ENCODE measurements at regions of chr16 and their contacts with region 1.

Region 1: GRCh38 chr16:88856828-88857733 is at the starts of genes GALNS and TRAPPC2L:
- DNase-seq: peak; percentile 98
- H3K4me3 ChIP-seq: peak within 1 kb of the TSS; percentile 82 to 93
- H3K27ac ChIP-seq: peak within 1 kb of the TSS; percentile 78 to 79
- H3K4me1 ChIP-seq: peaks cover 3% of the 10 kb centered on the region
- H3K27me3 ChIP-seq: no peaks in the 10 kb centered on the region
- CTCF ChIP-seq: no peak
- POLR2A ChIP-seq: peak; percentile 80
- total RNA-seq, gene GALNS: 20.4 to 75.1 TPM
- total RNA-seq, gene TRAPPC2L: 23.7 to 38.9 TPM

Region 2: DNA sequence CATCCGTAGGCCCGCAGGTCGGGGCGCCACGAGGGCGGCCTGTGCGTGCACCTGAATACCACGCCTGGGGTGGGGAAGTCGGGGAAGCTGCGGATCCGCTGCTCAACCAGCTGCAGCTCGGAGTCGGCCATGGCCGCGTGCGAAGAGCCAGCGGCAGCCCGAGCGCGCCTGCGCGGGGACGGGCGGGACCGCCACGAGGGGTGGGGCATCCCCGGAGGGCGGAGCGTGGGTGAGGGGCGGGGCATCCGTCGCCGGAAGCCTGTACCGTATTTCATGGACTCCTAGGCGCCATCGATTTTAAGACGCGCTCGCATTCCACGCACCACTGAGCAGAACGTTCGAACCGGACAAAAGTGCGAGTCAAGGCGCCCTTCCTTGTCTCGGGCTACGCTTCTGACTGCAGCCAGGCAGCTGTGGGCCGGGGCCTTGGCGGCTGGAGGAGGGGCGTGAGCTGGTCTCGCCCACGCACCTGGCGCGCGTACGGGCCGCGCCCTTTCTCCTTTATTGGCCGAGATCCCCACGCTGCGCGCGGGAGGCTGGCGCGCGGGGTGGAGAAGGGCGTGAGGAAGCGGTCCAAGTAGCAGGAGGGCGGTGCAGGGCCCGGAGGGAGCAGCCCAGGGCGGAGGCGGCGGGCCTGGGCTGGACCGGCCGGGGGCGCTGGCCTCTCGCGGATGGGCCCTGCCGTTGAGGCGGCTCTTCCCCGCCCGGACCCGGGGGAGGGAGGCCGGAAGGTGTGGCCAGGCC is 45.1 kb before region 1 on chr16 and contains the start of gene APRT:
- intact Hi-C with region 1: loop called (anchors 2 kb)
- DNase-seq: peak; percentile 90
- H3K4me3 ChIP-seq: peak within 1 kb of the TSS; percentile 60 to 62
- H3K27ac ChIP-seq: peak within 1 kb of the TSS; percentile 83 to 84
- H3K4me1 ChIP-seq: peaks cover 10% of the 10 kb centered on the region
- H3K27me3 ChIP-seq: no peaks in the 10 kb centered on the region
- CTCF ChIP-seq: peak in 3 of 4 experiments; percentile 23 to 62 (median 54)
- POLR2A ChIP-seq: peak; percentile 63
- total RNA-seq, gene APRT: 165 to 211 TPM

Region 3: GRCh38 chr16:89004209-89004831 is 147.2 kb after region 1 on chr16:
- intact Hi-C with region 1: no loop called
- DNase-seq: no peak
- H3K4me3 ChIP-seq: no peak overlapping the region
- H3K27ac ChIP-seq: no peak overlapping the region
- H3K4me1 ChIP-seq: no peaks in the 10 kb centered on the region
- H3K27me3 ChIP-seq: peaks cover 16% of the 10 kb centered on the region
- CTCF ChIP-seq: no peak
- POLR2A ChIP-seq: no peak